Tibial artery (tissue), 4 donors: ENCODE measurements at regions of chr15 and their contacts with region 1.

Region 1: GRCh38 chr15:72361176-72361575 is 14.6 kb downstream of the HEXA start:
- DNase-seq: no peak
- H3K4me3 ChIP-seq: no peak overlapping the region
- H3K27ac ChIP-seq: no peak overlapping the region
- H3K4me1 ChIP-seq: peaks cover 0 to 12% (median 1%) of the 10 kb centered on the region in 4 donors
- H3K27me3 ChIP-seq: no peaks in the 10 kb centered on the region
- CTCF ChIP-seq: no peak

Region 2: DNA sequence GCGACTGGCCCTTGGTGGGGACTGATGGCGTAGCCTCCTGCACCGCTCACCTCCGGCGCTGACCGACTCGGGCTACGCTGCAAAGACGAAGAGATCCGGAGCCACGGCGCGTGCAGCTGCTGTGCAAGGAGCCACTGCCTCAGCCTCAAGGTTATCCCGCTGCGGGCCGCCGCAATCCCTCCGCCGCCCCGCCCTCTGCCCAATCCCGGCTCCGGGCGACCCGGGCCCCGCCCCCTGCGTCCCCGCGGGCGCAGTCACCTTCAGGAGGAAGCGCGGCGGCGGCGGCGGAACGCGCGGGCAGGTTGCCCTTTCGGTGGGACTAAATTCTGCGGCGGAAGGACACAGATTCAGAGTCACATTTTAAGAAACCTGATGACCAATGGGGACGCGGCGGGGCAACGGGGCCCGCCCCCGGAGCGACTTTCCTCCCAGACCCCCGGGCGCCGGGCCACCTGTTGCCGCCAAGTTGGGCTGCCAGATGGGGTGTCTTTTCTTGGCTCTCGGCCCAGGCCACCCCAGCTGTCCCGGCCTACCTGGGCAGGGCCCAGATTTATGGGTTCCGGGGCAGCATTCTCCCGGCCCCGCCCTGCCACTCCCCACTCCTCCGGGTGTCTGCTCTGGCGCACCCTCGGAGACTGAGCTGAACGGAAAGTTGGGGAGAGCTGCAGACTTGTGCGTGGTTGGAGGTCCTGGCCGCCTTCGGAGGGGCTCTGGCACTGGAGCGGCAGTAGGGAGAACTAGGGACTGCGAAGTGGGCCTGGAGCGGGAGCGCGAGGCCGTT is 129.9 kb before region 1 on chr15 and contains the start of gene PKM:
- intact Hi-C with region 1: no loop called
- DNase-seq: peak; percentile 95 to 98
- H3K4me3 ChIP-seq: peak within 1 kb of the TSS; percentile 70 to 81
- H3K27ac ChIP-seq: peak within 1 kb of the TSS; percentile 100
- H3K4me1 ChIP-seq: peaks cover 0 to 46% (median 39%) of the 10 kb centered on the region in 4 donors
- H3K27me3 ChIP-seq: no peaks in the 10 kb centered on the region
- CTCF ChIP-seq: no peak

Region 3: DNA sequence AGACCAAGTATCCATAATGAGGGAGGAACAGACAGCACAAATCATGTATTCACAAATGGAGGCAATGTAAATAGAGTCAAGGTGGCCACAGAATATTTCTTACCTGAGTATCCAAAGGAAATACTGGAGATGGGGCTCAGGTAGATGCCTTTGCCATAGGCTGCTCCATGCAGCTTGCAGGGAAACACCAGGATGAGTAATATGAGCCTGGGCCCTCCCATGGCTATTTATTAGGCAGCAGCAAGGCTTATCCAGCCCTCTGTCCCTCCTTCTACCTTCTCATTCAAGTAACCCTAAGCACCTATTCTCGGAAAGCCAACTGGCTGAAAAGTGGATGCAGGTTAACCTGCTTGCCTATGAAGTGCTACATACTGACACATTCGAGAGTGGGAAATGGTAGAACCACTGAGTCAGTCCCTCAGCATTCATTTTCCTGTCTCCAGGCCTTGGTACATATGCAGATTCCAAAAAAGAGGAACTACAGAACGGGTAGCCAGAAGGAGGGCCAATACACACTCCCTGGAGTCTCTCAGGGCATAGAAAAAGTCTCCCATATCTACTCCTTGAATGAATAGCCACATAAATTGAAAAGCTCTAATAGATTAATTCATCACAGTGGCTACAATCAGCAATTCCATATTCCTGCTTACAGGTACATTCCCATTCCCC is 111.9 kb before region 1 on chr15:
- intact Hi-C with region 1: no loop called
- DNase-seq: no peak
- H3K4me3 ChIP-seq: no peak overlapping the region
- H3K27ac ChIP-seq: no peak overlapping the region
- H3K4me1 ChIP-seq: no peaks in the 10 kb centered on the region
- H3K27me3 ChIP-seq: no peaks in the 10 kb centered on the region
- CTCF ChIP-seq: no peak

Region 4: GRCh38 chr15:72289545-72290325 is 71.4 kb before region 1 on chr15:
- intact Hi-C with region 1: loop called (anchors 5 kb)
- DNase-seq: no peak
- H3K4me3 ChIP-seq: no peak overlapping the region
- H3K27ac ChIP-seq: no peak overlapping the region
- H3K4me1 ChIP-seq: no peaks in the 10 kb centered on the region
- H3K27me3 ChIP-seq: no peaks in the 10 kb centered on the region
- CTCF ChIP-seq: no peak

Region 5: GRCh38 chr15:72397796-72398588 is 36.8 kb after region 1 on chr15 and contains the start of gene TMEM202:
- intact Hi-C with region 1: no loop called
- DNase-seq: no peak
- H3K4me3 ChIP-seq: no peak within 1 kb of the TSS
- H3K27ac ChIP-seq: no peak within 1 kb of the TSS
- H3K4me1 ChIP-seq: no peaks in the 10 kb centered on the region
- H3K27me3 ChIP-seq: peaks cover 0 to 20% of the 10 kb centered on the region in 2 donors
- CTCF ChIP-seq: no peak